ENCODE measurements at regions of chr7 and their contacts with region 1.

Region 1: DNA sequence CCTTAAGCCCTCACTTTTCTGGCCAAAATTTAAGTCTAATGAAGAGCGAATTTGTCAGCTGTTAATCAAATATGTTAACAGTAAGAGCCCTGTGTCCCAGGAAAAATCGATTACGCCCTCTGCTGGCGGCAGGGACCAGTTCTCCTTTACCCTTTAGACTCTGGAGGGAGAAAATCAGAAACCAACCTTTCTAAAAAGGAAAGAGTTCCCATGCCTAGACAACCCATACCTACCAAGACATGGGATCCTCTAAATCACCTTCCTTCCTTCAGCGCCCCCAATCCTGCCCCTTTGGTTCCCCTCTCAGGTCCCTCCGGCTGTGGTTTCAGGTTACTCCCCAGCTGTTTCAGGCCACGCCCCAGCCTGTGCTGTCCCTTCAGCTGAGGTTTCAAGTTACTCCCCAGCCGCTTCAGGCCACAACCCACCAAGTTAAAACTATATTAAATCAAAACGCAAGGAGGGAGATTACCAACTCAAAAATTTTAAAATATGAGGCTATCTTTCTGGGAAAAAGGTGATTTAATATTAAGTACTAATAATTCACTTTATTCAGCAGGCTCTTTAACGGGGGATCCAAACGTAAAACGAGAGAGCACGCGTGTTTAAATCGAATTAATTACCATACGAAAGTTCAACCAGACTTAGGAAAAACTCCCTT is 1.4 kb upstream of the AKR1B15 start:
- DNase-seq: peak; percentile 81 to 91
- ATAC-seq: peak; percentile 83
- H3K4me3 ChIP-seq: peak overlapping the region; percentile 31 to 36
- H3K27ac ChIP-seq: no peak overlapping the region
- H3K4me1 ChIP-seq: no peaks in the 10 kb centered on the region
- H3K27me3 ChIP-seq: no peaks in the 10 kb centered on the region

Region 2: GRCh38 chr7:134432296-134433152 is 115.0 kb before region 1 on chr7:
- intact Hi-C with region 1: loop called (anchors 1 to 5 kb)
- DNase-seq: peak; percentile 90 to 95
- ATAC-seq: peak; percentile 96
- H3K4me3 ChIP-seq: no peak overlapping the region
- H3K27ac ChIP-seq: peak overlapping the region in 1 of 2 donors; percentile 21
- H3K4me1 ChIP-seq: no peaks in the 10 kb centered on the region
- H3K27me3 ChIP-seq: no peaks in the 10 kb centered on the region